Left ventricle myocardium inferior (tissue), 1 donor: ENCODE measurements at regions of chr7 and their contacts with region 1.

Region 1: DNA sequence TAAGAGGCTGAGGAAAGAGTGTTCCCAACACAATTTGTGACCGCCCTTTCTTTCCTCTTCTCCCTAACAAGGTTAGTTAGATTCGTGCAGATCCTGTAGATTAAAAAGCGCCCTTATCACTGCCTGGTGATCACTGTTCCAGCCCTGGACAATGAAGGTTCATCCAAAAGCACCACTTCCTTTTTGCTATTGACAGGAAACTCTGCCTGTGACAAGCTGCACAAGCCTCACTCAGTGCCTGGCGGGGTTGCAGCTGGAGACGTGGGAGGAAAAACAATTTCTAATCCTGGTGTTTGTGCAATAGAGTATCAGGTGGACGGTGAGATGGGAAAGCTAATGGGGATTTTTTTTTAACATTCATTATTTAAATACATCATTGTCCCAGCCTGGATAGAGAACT is 105.9 kb upstream of the CAV2 start:
- DNase-seq: peak; percentile 33
- H3K4me3 ChIP-seq: no peak overlapping the region
- H3K27ac ChIP-seq: peak overlapping the region; percentile 78
- H3K4me1 ChIP-seq: peaks cover 43% of the 10 kb centered on the region
- H3K27me3 ChIP-seq: no peaks in the 10 kb centered on the region
- CTCF ChIP-seq: no peak

Region 2: DNA sequence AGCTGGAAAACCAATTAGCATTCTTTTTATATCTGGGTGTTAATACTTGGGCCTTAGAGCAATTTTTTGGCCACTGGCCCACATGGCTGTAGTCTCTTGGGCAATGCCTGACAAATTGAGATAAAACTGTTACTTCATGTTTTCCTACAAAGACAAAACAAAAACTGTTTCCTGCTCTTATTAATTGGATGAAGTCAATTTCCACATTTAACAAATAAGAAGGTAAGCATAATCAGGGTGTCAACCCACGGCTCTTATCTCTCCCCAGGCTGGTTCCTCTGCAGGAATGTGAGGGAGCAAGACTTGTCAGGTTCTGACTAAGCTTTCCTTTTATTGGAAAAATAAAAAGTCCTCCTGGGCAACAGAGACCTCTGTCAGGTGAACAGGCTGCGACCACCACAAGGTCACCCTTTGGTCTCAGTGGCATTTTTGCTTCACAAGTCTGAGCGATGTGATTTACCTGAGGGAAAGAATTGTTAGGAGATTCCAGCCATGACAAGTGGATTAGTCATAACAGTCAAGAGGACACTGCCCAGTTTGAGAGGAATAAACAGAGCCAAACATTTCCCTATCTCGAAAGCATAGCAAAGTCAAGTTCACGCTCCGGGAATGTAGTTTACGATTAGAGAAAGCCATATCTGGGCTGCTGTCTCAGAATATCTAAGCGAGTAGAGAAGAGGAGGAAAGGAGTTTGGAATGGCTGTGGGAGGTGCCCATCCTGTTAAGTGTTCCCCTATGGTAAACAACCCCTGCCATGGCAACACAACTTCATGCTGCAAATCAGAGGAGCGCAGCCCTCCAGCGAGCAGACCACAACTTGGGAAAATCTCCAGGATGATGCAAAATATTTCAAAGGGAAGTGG is 38.9 kb before region 1 on chr7:
- intact Hi-C with region 1: loop called (anchors 5 kb)
- DNase-seq: peak; percentile 74
- H3K4me3 ChIP-seq: peak overlapping the region; percentile 51
- H3K27ac ChIP-seq: peak overlapping the region; percentile 96
- H3K4me1 ChIP-seq: peaks cover 62% of the 10 kb centered on the region
- H3K27me3 ChIP-seq: no peaks in the 10 kb centered on the region
- CTCF ChIP-seq: no peak